Testis (tissue), 5 donors: ENCODE measurements at regions of chr9 and their contacts with region 1.

Region 1: GRCh38 chr9:131598121-131598520 is 52.8 kb downstream of the PRRT1B start:
- DNase-seq: peak; percentile 46
- H3K4me3 ChIP-seq: no peak overlapping the region
- H3K27ac ChIP-seq: no peak overlapping the region
- H3K4me1 ChIP-seq: peaks cover 11% of the 10 kb centered on the region
- H3K27me3 ChIP-seq: no peaks in the 10 kb centered on the region
- CTCF ChIP-seq: no peak
- POLR2A ChIP-seq: no peak

Region 2: DNA sequence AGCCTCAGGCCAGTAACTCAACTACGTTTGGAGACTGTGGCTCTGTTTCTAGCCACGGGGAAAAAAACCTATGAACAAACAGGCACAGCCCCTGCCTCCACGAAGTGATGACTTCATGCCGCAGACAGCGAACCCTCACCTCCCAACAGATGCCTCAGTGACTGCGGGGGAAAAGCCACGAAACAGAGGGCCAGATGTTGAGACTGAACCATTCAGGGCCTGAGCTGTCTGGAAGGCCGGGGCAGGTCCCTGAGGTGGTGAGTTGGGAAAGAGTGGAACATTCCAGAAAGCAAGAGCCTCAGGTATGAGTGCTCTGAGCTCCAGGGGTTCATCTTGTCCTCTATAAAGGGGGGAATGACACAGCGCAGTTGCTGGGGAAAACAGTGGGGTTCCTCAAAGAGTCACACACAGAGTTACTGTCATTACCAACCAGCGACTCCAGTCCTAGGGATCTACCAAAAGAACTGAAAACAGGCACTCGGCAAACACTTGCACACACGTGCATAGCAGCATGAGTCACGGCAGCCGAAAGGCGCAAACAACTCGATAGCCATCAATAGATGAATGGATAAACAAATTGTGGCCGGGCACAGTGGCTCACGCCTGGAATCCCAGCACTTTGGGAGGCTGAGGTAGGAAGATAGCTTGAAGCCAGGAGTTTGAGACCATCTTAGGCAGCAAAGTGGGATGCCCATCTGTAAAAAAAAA is 293.3 kb before region 1 on chr9:
- intact Hi-C with region 1: no loop called
- DNase-seq: no peak
- H3K4me3 ChIP-seq: no peak overlapping the region
- H3K27ac ChIP-seq: no peak overlapping the region
- H3K4me1 ChIP-seq: no peaks in the 10 kb centered on the region
- H3K27me3 ChIP-seq: no peaks in the 10 kb centered on the region
- CTCF ChIP-seq: no peak
- POLR2A ChIP-seq: no peak

Region 3: DNA sequence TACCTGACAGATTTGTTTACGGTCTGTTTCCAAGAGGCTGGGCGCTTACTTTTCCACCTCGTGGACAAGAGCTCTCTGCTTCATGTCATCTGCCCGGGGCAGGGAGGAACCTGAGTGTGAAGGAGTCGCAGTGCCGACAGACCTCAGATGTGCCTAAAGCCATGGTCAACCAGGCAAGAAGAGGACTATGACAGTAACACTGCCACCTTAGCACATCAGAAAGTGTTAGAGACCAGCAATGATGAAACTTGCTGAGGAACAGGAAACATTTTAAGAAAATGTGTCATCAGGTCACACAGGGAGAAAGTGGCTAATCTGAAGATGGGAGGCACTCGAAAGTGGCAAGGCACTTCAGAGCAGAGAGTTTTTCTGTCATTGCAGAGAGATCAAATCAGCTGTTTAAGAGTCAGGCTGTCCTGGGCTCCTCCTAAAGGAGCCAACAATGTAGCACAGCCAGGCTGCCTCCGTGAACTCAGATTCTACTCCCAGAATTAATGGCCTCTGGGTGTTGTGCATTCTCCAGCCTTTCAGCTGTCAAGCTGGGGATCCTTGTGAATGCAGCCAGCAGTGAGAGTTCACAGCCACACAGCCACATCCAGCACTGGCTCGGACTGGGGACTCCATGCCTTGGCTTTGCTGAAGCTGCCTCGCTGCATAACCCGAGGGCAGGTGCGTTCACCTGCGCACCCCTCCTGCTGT is 47.1 kb after region 1 on chr9:
- intact Hi-C with region 1: loop called (anchors 5 kb)
- DNase-seq: no peak
- H3K4me3 ChIP-seq: no peak overlapping the region
- H3K27ac ChIP-seq: no peak overlapping the region
- H3K4me1 ChIP-seq: peaks cover 3% of the 10 kb centered on the region
- H3K27me3 ChIP-seq: no peaks in the 10 kb centered on the region
- CTCF ChIP-seq: no peak
- POLR2A ChIP-seq: no peak

Region 4: GRCh38 chr9:131739980-131740648 is 142.0 kb after region 1 on chr9 and contains the start of gene RAPGEF1:
- intact Hi-C with region 1: loop called (anchors 2 kb)
- DNase-seq: peak; percentile 64
- H3K4me3 ChIP-seq: peak within 1 kb of the TSS; percentile 62 to 72
- H3K27ac ChIP-seq: peak within 1 kb of the TSS; percentile 34 to 88
- H3K4me1 ChIP-seq: peaks cover 9% of the 10 kb centered on the region
- H3K27me3 ChIP-seq: no peaks in the 10 kb centered on the region
- CTCF ChIP-seq: peak; percentile 80 to 100 (median 91)
- POLR2A ChIP-seq: no peak
- total RNA-seq, gene RAPGEF1: 55.8 to 56.9 TPM